ENCODE measurements at regions of chr2 and their contacts with region 1.

Region 1: DNA sequence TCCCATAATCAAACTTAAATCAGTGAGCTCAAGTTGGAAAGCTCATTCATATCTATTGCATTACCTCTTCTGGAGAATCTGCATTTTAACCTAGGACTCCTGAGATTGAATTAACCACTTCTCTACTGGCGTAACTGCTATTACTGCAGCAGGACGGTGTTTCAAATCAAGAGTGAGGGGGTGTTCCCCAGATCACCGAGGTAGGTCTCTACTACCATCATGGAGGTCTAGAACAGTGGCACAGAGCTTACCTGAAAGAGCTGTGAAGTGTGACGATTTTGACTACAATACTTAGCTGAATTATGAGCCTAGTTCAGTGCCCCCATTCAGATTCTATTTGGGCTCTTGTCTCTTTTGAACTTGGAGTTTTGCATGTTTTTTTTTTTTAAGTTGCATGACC is 119.5 kb downstream of the POLE4 start:
- DNase-seq: no peak
- H3K4me3 ChIP-seq: no peak overlapping the region
- H3K4me3 Mint-ChIP-seq: no peak overlapping the region
- H3K27ac Mint-ChIP-seq: no peak overlapping the region
- H3K4me1 ChIP-seq: no peaks in the 10 kb centered on the region
- H3K4me1 Mint-ChIP-seq: no peaks in the 10 kb centered on the region
- H3K27me3 ChIP-seq: no peaks in the 10 kb centered on the region; the same call in 1 of the 2 replicates
- H3K27me3 Mint-ChIP-seq: no peaks in the 10 kb centered on the region
- CTCF ChIP-seq: no peak

Region 2: DNA sequence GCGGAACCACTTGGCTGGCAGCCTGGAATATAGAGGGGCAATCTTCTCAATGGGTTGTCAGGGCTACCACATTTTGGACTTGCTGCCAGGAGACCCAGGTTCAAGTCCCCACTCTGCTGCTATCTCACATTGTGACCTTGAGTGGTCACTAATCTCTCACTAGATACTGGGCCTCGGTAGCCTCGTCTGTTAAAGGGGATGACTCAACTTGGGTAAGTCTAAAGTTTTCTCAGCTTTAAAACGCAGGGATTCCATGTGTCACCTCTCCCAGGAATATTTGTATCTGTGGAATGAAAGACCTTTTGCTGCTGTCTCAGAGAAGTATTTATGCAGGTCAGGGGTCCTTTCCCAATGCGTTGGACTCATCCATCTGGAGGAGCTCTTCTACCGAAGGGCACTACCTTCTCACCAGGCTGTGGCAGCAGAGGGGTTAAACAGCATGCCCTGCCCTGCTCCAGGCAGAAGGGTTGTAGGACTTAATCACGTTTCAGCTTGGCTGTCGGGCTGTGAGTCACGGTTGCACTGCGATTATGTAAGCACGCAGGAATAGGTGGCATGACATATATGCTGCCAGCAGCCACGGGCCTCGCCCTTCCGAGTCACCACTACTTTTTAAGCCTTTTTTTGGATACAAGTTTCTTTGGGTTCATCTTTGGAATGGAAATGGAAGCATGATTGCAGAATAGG is 337.4 kb before region 1 on chr2:
- CTCF ChIA-PET with region 1: no interaction called
- POLR2A ChIA-PET with region 1: no interaction called
- intact Hi-C with region 1: no loop called
- DNase-seq: peak; percentile 59 to 79
- H3K4me3 ChIP-seq: no peak overlapping the region
- H3K4me3 Mint-ChIP-seq: no peak overlapping the region
- H3K27ac Mint-ChIP-seq: peak overlapping the region; percentile 48
- H3K4me1 ChIP-seq: peaks cover 19% of the 10 kb centered on the region
- H3K4me1 Mint-ChIP-seq: peaks cover 9% of the 10 kb centered on the region
- H3K27me3 ChIP-seq: no peaks in the 10 kb centered on the region
- H3K27me3 Mint-ChIP-seq: no peaks in the 10 kb centered on the region
- CTCF ChIP-seq: no peak

Region 3: DNA sequence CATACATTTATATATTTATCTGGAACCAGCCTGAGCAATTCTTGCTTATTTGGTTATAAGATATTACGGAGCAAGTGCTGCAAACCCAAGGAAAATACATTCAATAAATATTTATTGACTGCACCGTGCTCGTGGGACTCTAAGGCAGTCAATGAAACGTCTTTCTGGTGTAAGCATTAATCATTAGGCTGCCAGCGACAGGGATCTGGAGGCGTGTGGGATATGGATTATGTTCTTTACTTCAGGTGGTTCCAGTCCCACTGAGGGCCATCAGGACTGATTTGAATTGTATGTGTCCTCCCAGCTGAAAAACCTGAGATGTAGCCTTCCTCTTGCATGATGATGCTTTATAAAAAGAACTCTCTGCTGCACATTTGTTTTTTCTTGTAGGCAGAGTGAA is 46.0 kb after region 1 on chr2:
- CTCF ChIA-PET with region 1: no interaction called
- POLR2A ChIA-PET with region 1: interaction called, 20 read pairs
- intact Hi-C with region 1: no loop called
- DNase-seq: no peak
- H3K4me3 ChIP-seq: no peak overlapping the region
- H3K4me3 Mint-ChIP-seq: no peak overlapping the region
- H3K27ac Mint-ChIP-seq: no peak overlapping the region
- H3K4me1 ChIP-seq: no peaks in the 10 kb centered on the region
- H3K4me1 Mint-ChIP-seq: no peaks in the 10 kb centered on the region
- H3K27me3 ChIP-seq: no peaks in the 10 kb centered on the region; the same call in 1 of the 2 replicates
- H3K27me3 Mint-ChIP-seq: no peaks in the 10 kb centered on the region
- CTCF ChIP-seq: no peak

Region 4: GRCh38 chr2:75340560-75341330 is 262.8 kb after region 1 on chr2:
- CTCF ChIA-PET with region 1: no interaction called
- POLR2A ChIA-PET with region 1: no interaction called
- intact Hi-C with region 1: no loop called
- DNase-seq: no peak
- H3K4me3 ChIP-seq: no peak overlapping the region
- H3K4me3 Mint-ChIP-seq: no peak overlapping the region
- H3K27ac Mint-ChIP-seq: no peak overlapping the region
- H3K4me1 ChIP-seq: no peaks in the 10 kb centered on the region
- H3K4me1 Mint-ChIP-seq: no peaks in the 10 kb centered on the region
- H3K27me3 ChIP-seq: peaks cover 1% of the 10 kb centered on the region; the same call in 1 of the 2 replicates
- H3K27me3 Mint-ChIP-seq: peaks cover 17% of the 10 kb centered on the region
- CTCF ChIP-seq: no peak

Measured in Caco-2 (cell line).